ENCODE measurements at regions of chr7 and their contacts with region 1.

Region 1: DNA sequence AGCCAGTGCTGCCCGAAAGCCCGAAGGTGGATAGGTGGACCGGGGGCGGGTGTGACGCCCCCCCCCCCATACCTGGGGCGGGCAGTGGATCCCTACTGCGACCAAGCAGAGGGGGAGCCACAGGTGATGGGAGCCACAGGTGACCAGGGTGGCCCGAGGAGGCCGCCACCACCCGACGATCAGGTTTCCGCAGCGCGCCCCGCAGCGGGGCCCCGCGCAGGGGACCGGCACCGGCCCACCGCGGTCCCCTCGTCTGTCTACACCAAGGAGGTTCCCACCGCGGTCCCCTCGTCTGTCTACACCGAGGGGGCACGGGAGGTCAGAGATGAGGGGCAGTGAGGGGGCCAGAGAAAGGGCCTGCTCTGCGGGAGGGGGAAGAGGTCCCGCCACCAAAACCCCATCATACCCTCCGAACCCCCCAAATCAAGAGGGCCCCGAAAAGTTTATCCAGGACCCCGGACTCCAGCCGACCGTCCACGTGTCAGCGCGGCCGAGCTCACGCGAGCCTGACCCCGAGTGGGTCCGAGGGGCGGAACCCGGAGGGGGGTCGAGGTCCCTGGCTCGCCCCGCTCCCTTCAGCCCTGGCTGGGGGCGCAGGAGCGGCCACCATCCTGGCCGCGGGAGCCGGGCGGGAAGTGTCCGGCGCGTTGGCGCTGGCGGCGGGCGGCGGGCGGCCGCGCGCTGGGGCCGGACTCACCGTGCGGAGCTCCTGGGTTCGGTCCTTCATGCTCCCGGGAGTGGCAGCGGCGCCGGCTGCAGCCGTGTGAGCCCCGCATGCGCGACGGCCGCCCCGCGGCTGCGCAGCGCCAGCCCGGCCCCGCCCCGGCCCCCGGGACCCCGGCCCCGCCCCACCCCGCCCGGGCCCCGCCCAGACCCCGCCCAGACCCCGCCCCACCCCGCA is at the start of gene STX1A:
- DNase-seq: peak; percentile 28 to 86 (median 69)
- ATAC-seq: peak; percentile 76
- H3K4me3 ChIP-seq: peak within 1 kb of the TSS; percentile 73 to 79
- H3K4me3 Mint-ChIP-seq: peak within 1 kb of the TSS; percentile 87
- H3K27ac ChIP-seq: no peak within 1 kb of the TSS
- H3K27ac Mint-ChIP-seq: no peak within 1 kb of the TSS
- H3K4me1 ChIP-seq: peaks cover 28% of the 10 kb centered on the region
- H3K4me1 Mint-ChIP-seq: peaks cover 22% of the 10 kb centered on the region
- H3K27me3 ChIP-seq: no peaks in the 10 kb centered on the region
- H3K27me3 Mint-ChIP-seq: no peaks in the 10 kb centered on the region
- CTCF ChIP-seq: no peak
- total RNA-seq, gene STX1A: 18.2 to 20.8 TPM

Region 2: GRCh38 chr7:73667344-73668102 is 51.6 kb before region 1 on chr7 and contains the start of gene VPS37D:
- CTCF ChIA-PET with region 1: interaction called, 6 read pairs
- POLR2A ChIA-PET with region 1: interaction called, 3 read pairs
- intact Hi-C with region 1: loop called (anchors 1 to 2 kb)
- DNase-seq: peak; percentile 84 to 98 (median 93)
- ATAC-seq: peak; percentile 92
- H3K4me3 ChIP-seq: peak within 1 kb of the TSS; percentile 37 to 42
- H3K4me3 Mint-ChIP-seq: peak within 1 kb of the TSS; percentile 83
- H3K27ac ChIP-seq: no peak within 1 kb of the TSS
- H3K27ac Mint-ChIP-seq: no peak within 1 kb of the TSS
- H3K4me1 ChIP-seq: peaks cover 11% of the 10 kb centered on the region
- H3K4me1 Mint-ChIP-seq: peaks cover 7% of the 10 kb centered on the region
- H3K27me3 ChIP-seq: peaks cover 0 to 17% of the 10 kb centered on the region in 2 experiments
- H3K27me3 Mint-ChIP-seq: peaks cover 24% of the 10 kb centered on the region
- CTCF ChIP-seq: peak; percentile 62
- total RNA-seq, gene VPS37D: 0.89 to 1.3 TPM

Region 3: GRCh38 chr7:73683056-73683964 is 35.8 kb before region 1 on chr7 and contains the starts of genes BUD23 and DNAJC30:
- CTCF ChIA-PET with region 1: interaction called, 5 read pairs
- POLR2A ChIA-PET with region 1: no interaction called
- intact Hi-C with region 1: loop called (anchors 1 kb)
- DNase-seq: peak; percentile 95 to 97 (median 97)
- ATAC-seq: peak; percentile 98
- H3K4me3 ChIP-seq: peak within 1 kb of the TSS; percentile 80 to 96
- H3K4me3 Mint-ChIP-seq: peak within 1 kb of the TSS; percentile 93
- H3K27ac ChIP-seq: peak within 1 kb of the TSS; percentile 81 to 90
- H3K27ac Mint-ChIP-seq: peak within 1 kb of the TSS; percentile 97
- H3K4me1 ChIP-seq: peaks cover 29% of the 10 kb centered on the region
- H3K4me1 Mint-ChIP-seq: peaks cover 39% of the 10 kb centered on the region
- H3K27me3 ChIP-seq: no peaks in the 10 kb centered on the region
- H3K27me3 Mint-ChIP-seq: no peaks in the 10 kb centered on the region
- CTCF ChIP-seq: no peak
- total RNA-seq, gene BUD23: 123 to 129 TPM
- total RNA-seq, gene DNAJC30: 13.5 to 14.4 TPM

Region 4: GRCh38 chr7:73703757-73704639 is 15.2 kb before region 1 on chr7:
- CTCF ChIA-PET with region 1: interaction called, 3 read pairs
- POLR2A ChIA-PET with region 1: interaction called, 4 read pairs
- intact Hi-C with region 1: loop called in 1 of 2 experiments (anchors 1 kb)
- DNase-seq: peak in 4 of 9 experiments; percentile 41 to 61 (median 49)
- ATAC-seq: peak; percentile 72
- H3K4me3 ChIP-seq: no peak overlapping the region
- H3K4me3 Mint-ChIP-seq: no peak overlapping the region
- H3K27ac ChIP-seq: no peak overlapping the region
- H3K27ac Mint-ChIP-seq: no peak overlapping the region
- H3K4me1 ChIP-seq: peaks cover 14% of the 10 kb centered on the region
- H3K4me1 Mint-ChIP-seq: peaks cover 8% of the 10 kb centered on the region
- H3K27me3 ChIP-seq: no peaks in the 10 kb centered on the region
- H3K27me3 Mint-ChIP-seq: no peaks in the 10 kb centered on the region
- CTCF ChIP-seq: no peak

Measured in CD8-positive, alpha-beta T cell (primary cell).